Thyroid gland (tissue), 4 donors: ENCODE measurements at regions of chr19 and their contacts with region 1.

Region 1: GRCh38 chr19:41959056-41960053 is at the start of gene RABAC1:
- DNase-seq: peak; percentile 82 to 86
- H3K4me3 ChIP-seq: peak within 1 kb of the TSS; percentile 66 to 91 (median 87)
- H3K27ac ChIP-seq: peak within 1 kb of the TSS; percentile 70 to 92 (median 89)
- H3K4me1 ChIP-seq: peaks cover 6 to 13% of the 10 kb centered on the region in 2 donors
- H3K27me3 ChIP-seq: no peaks in the 10 kb centered on the region
- CTCF ChIP-seq: peak in 1 of 6 experiments; percentile 25
- POLR2A ChIP-seq: peak in 1 of 2 donors; percentile 58
- total RNA-seq, gene RABAC1: 138 to 359 (median 241) TPM

Region 2: DNA sequence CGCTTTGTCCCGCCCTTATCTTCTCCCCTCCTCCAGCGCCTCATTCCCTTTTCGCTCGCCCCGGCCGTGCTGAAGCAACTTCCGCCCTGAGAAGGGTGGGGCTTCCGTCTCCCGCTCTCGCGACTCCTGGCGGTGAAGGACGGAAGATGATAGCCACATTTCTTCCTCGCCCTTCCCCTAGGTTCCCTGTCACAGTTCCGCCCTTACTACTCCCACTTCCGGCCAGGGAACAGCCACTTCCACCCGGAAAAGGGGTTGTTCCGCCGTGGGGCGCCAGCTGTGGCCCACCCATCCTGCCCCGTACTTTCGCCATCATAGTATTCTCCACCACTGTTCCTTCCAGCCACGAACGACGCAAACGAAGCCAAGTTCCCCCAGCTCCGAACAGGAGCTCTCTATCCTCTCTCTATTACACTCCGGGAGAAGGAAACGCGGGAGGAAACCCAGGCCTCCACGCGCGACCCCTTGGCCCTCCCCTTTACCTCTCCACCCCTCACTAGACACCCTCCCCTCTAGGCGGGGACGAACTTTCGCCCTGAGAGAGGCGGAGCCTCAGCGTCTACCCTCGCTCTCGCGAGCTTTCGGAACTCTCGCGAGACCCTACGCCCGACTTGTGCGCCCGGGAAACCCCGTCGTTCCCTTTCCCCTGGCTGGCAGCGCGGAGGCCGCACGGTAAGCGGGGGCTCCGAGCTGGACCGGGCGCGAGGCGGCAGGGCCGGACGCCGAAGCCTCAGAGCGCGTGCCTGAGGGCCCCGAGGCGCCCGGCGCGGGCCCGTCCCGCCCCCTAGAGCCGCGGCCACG is 99.5 kb before region 1 on chr19 and contains the start of gene RPS19:
- intact Hi-C with region 1: loop called (anchors 5 kb)
- DNase-seq: peak; percentile 98 to 99
- H3K4me3 ChIP-seq: peak within 1 kb of the TSS; percentile 38 to 97 (median 65)
- H3K27ac ChIP-seq: peak within 1 kb of the TSS; percentile 86 to 94 (median 89)
- H3K4me1 ChIP-seq: peaks cover 18 to 19% of the 10 kb centered on the region in 2 donors
- H3K27me3 ChIP-seq: no peaks in the 10 kb centered on the region
- CTCF ChIP-seq: peak; percentile 40 to 91 (median 68)
- POLR2A ChIP-seq: peak; percentile 18 to 87
- total RNA-seq, gene RPS19: 351 to 1,305 (median 623) TPM

Region 3: GRCh38 chr19:42023121-42023942 is 64.0 kb after region 1 on chr19:
- intact Hi-C with region 1: no loop called
- DNase-seq: no peak
- H3K4me3 ChIP-seq: no peak overlapping the region
- H3K27ac ChIP-seq: no peak overlapping the region
- H3K4me1 ChIP-seq: peaks cover 10 to 11% of the 10 kb centered on the region in 2 donors
- H3K27me3 ChIP-seq: no peaks in the 10 kb centered on the region
- CTCF ChIP-seq: no peak
- POLR2A ChIP-seq: no peak

Region 4: DNA sequence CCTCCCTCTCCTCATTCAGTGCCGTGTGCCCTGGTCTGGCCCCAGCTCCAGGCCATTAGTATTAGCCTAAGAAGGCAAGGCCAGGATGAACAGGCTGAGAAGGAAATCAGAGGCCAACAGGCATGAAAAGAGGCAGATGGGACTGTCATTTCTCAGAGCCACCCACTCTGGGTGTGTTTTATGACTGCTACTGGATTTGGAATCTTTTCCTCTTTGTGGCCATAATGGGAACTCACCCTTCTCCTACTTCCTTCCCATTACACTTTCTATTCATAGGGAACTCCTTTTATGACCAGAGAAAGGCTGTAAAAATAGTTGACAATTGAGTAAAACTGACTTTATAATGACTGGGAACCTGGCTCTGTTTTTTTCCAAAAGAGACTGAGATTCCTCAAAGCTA is 617.7 kb after region 1 on chr19:
- intact Hi-C with region 1: no loop called
- DNase-seq: no peak
- H3K4me3 ChIP-seq: no peak overlapping the region
- H3K27ac ChIP-seq: no peak overlapping the region
- H3K4me1 ChIP-seq: no peaks in the 10 kb centered on the region
- H3K27me3 ChIP-seq: no peaks in the 10 kb centered on the region
- CTCF ChIP-seq: no peak
- POLR2A ChIP-seq: no peak